Natural killer cell (primary cell): ENCODE measurements at regions of chr19 and their contacts with region 1.

Region 1: DNA sequence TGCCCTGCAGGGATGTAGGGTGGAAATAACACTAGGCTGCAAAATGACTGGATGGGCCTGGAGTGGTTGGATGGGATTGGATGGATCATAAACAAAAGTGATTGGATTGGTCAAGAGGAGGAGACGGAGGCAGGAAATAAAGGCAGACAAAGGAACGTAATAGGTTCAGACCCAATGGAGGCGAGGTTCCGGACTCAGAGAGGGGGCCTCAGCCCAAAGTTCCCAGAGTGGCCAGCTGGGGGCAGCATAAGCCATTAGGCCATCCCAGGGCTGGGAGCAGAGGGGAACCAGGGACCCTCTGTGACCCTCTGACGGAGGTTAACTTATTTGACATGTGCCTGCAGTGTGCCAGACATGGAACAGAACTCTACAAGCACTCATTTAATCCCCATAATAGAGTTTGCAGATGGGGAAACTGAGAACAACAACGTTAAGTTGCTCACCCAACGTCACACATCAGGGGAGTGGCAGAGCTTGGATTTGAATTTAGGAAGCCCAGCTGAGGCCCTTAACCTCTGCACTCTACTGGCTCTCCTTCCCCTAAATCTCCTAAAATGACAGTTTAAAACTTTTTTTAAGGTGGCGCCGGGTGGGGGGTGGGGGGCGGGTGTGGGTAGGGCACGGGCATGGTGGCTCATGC is 15.3 kb upstream of the MAP1S start:
- DNase-seq: peak; percentile 68 to 82
- ATAC-seq: peak; percentile 88 to 97 (median 96)
- H3K4me3 ChIP-seq: no peak overlapping the region
- H3K4me3 Mint-ChIP-seq: no peak overlapping the region
- H3K27ac ChIP-seq: no peak overlapping the region
- H3K27ac Mint-ChIP-seq: no peak overlapping the region
- H3K4me1 ChIP-seq: no peaks in the 10 kb centered on the region
- H3K4me1 Mint-ChIP-seq: no peaks in the 10 kb centered on the region
- H3K27me3 ChIP-seq: no peaks in the 10 kb centered on the region
- H3K27me3 Mint-ChIP-seq: peaks cover 0 to 7% of the 10 kb centered on the region in 2 donors
- CTCF ChIP-seq: peak; percentile 88

Region 2: GRCh38 chr19:17680235-17680722 is 23.7 kb before region 1 on chr19:
- intact Hi-C with region 1: no loop called
- DNase-seq: peak; percentile 67 to 80
- ATAC-seq: peak; percentile 93 to 96 (median 95)
- H3K4me3 ChIP-seq: peak overlapping the region; percentile 17
- H3K4me3 Mint-ChIP-seq: peak overlapping the region; percentile 83
- H3K27ac ChIP-seq: no peak overlapping the region
- H3K27ac Mint-ChIP-seq: peak overlapping the region in 1 of 2 donors; percentile 89
- H3K4me1 ChIP-seq: peaks cover 14% of the 10 kb centered on the region
- H3K4me1 Mint-ChIP-seq: peaks cover 22 to 28% of the 10 kb centered on the region in 2 donors
- H3K27me3 ChIP-seq: peaks cover 12% of the 10 kb centered on the region
- H3K27me3 Mint-ChIP-seq: peaks cover 21 to 42% of the 10 kb centered on the region in 2 donors
- CTCF ChIP-seq: no peak

Region 3: GRCh38 chr19:17766543-17767131 is 62.7 kb after region 1 on chr19:
- intact Hi-C with region 1: loop called (anchors 2 kb)
- DNase-seq: peak; percentile 50 to 55
- ATAC-seq: peak; percentile 65 to 79 (median 78)
- H3K4me3 ChIP-seq: no peak overlapping the region
- H3K4me3 Mint-ChIP-seq: no peak overlapping the region
- H3K27ac ChIP-seq: no peak overlapping the region
- H3K27ac Mint-ChIP-seq: no peak overlapping the region
- H3K4me1 ChIP-seq: peaks cover 12% of the 10 kb centered on the region
- H3K4me1 Mint-ChIP-seq: peaks cover 5 to 8% of the 10 kb centered on the region in 2 donors
- H3K27me3 ChIP-seq: no peaks in the 10 kb centered on the region
- H3K27me3 Mint-ChIP-seq: no peaks in the 10 kb centered on the region
- CTCF ChIP-seq: peak; percentile 57

Region 4: GRCh38 chr19:17784201-17785008 is 80.5 kb after region 1 on chr19:
- intact Hi-C with region 1: loop called (anchors 2 kb)
- DNase-seq: peak; percentile 66 to 85
- ATAC-seq: peak; percentile 71 to 89 (median 83)
- H3K4me3 ChIP-seq: no peak overlapping the region
- H3K4me3 Mint-ChIP-seq: no peak overlapping the region
- H3K27ac ChIP-seq: no peak overlapping the region
- H3K27ac Mint-ChIP-seq: no peak overlapping the region
- H3K4me1 ChIP-seq: peaks cover 3% of the 10 kb centered on the region
- H3K4me1 Mint-ChIP-seq: peaks cover 0 to 14% of the 10 kb centered on the region in 2 donors
- H3K27me3 ChIP-seq: no peaks in the 10 kb centered on the region
- H3K27me3 Mint-ChIP-seq: no peaks in the 10 kb centered on the region
- CTCF ChIP-seq: peak; percentile 80